ENCODE measurements at regions of chr12 and their contacts with region 1.

Region 1: GRCh38 chr12:69359531-69360347 is at the start of gene YEATS4:
- DNase-seq: peak; percentile 81 to 96
- ATAC-seq: peak; percentile 79 to 88 (median 85)
- H3K4me3 ChIP-seq: peak within 1 kb of the TSS; percentile 95
- H3K4me3 Mint-ChIP-seq: peak within 1 kb of the TSS; percentile 88
- H3K27ac ChIP-seq: peak within 1 kb of the TSS; percentile 96
- H3K27ac Mint-ChIP-seq: peak within 1 kb of the TSS; percentile 93 to 95
- H3K4me1 ChIP-seq: peaks cover 16% of the 10 kb centered on the region
- H3K4me1 Mint-ChIP-seq: peaks cover 25 to 27% of the 10 kb centered on the region in 2 donors
- H3K27me3 ChIP-seq: no peaks in the 10 kb centered on the region
- H3K27me3 Mint-ChIP-seq: peaks cover 0 to 7% of the 10 kb centered on the region in 2 donors
- CTCF ChIP-seq: no peak
- total RNA-seq, gene YEATS4: 18.2 to 23.9 (median 20.3) TPM

Region 2: GRCh38 chr12:69290545-69291277 is 69.0 kb before region 1 on chr12:
- intact Hi-C with region 1: loop called (anchors 10 kb)
- DNase-seq: peak; percentile 66 to 91
- ATAC-seq: peak; percentile 97 to 100 (median 100)
- H3K4me3 ChIP-seq: no peak overlapping the region
- H3K4me3 Mint-ChIP-seq: no peak overlapping the region
- H3K27ac ChIP-seq: no peak overlapping the region
- H3K27ac Mint-ChIP-seq: no peak overlapping the region
- H3K4me1 ChIP-seq: peaks cover 3% of the 10 kb centered on the region
- H3K4me1 Mint-ChIP-seq: no peaks in the 10 kb centered on the region
- H3K27me3 ChIP-seq: peaks cover 2% of the 10 kb centered on the region
- H3K27me3 Mint-ChIP-seq: peaks cover 43 to 64% of the 10 kb centered on the region in 2 donors
- CTCF ChIP-seq: peak; percentile 87

Region 3: GRCh38 chr12:69570545-69571399 is 211.0 kb after region 1 on chr12:
- intact Hi-C with region 1: loop called (anchors 1 kb)
- DNase-seq: peak; percentile 22 to 87
- ATAC-seq: peak; percentile 73 to 95 (median 92)
- H3K4me3 ChIP-seq: no peak overlapping the region
- H3K4me3 Mint-ChIP-seq: no peak overlapping the region
- H3K27ac ChIP-seq: no peak overlapping the region
- H3K27ac Mint-ChIP-seq: peak overlapping the region; percentile 34 to 73
- H3K4me1 ChIP-seq: no peaks in the 10 kb centered on the region
- H3K4me1 Mint-ChIP-seq: peaks cover 4 to 8% of the 10 kb centered on the region in 2 donors
- H3K27me3 ChIP-seq: no peaks in the 10 kb centered on the region
- H3K27me3 Mint-ChIP-seq: no peaks in the 10 kb centered on the region
- CTCF ChIP-seq: peak; percentile 81

Region 4: DNA sequence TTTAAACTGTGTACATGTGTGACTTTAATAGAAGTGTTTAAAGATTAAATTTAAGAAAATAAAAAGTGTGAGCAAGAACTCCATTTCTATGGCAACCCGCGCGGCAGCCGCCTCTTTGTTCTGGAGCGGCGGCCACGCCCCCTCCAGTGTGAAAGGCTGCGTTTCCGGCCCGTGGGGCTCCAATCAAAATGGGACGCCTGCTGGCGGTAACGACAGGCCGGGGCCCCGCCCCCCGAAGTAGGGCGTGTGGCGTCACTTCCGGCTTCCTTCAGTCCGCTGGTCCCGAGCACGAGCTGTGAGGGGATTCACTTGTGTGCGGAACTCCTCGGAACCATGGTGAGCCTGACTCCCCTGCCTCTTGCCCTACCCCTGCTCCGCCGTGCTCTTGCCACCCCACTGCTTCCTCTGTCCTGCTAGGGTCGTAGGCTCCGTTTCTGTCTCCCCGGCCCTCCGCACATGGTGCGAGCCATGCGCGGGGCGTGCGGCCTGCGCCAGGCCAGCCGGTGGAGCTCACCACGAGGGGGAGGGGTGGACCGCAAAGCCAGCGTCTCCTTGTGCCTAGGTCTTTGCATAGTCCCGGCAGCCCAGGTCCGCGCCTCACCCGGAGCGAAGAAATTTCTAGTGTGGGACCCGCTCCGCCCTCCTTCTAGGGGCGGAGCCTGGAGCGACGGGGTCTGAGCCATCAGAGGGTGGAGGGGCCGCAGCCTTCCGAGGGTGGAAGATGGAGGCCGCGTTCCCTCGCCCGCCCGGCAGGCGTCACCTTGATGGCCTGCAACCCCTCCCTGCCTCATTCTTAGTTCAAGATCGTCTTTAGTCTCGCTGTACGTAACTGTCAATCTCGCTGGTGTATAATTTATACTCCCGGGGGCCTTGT is 225.7 kb after region 1 on chr12 and contains the start of gene CCT2:
- intact Hi-C with region 1: loop called (anchors 1 kb)
- DNase-seq: peak; percentile 95 to 99
- ATAC-seq: peak; percentile 90 to 98 (median 93)
- H3K4me3 ChIP-seq: peak within 1 kb of the TSS; percentile 70
- H3K4me3 Mint-ChIP-seq: peak within 1 kb of the TSS; percentile 98
- H3K27ac ChIP-seq: peak within 1 kb of the TSS; percentile 79
- H3K27ac Mint-ChIP-seq: peak within 1 kb of the TSS; percentile 96 to 99
- H3K4me1 ChIP-seq: peaks cover 8% of the 10 kb centered on the region
- H3K4me1 Mint-ChIP-seq: peaks cover 8 to 9% of the 10 kb centered on the region in 2 donors
- H3K27me3 ChIP-seq: no peaks in the 10 kb centered on the region
- H3K27me3 Mint-ChIP-seq: no peaks in the 10 kb centered on the region
- CTCF ChIP-seq: peak; percentile 32
- total RNA-seq, gene CCT2: 154 to 171 (median 171) TPM

Region 5: GRCh38 chr12:69639400-69640016 is 279.8 kb after region 1 on chr12:
- intact Hi-C with region 1: loop called (anchors 1 kb)
- DNase-seq: peak; percentile 38 to 79
- ATAC-seq: peak; percentile 70 to 81 (median 76)
- H3K4me3 ChIP-seq: no peak overlapping the region
- H3K4me3 Mint-ChIP-seq: no peak overlapping the region
- H3K27ac ChIP-seq: no peak overlapping the region
- H3K27ac Mint-ChIP-seq: no peak overlapping the region
- H3K4me1 ChIP-seq: no peaks in the 10 kb centered on the region
- H3K4me1 Mint-ChIP-seq: no peaks in the 10 kb centered on the region
- H3K27me3 ChIP-seq: no peaks in the 10 kb centered on the region
- H3K27me3 Mint-ChIP-seq: peaks cover 0 to 3% of the 10 kb centered on the region in 2 donors
- CTCF ChIP-seq: peak; percentile 82

Measured in natural killer cell (primary cell).